ENCODE measurements at regions of chr1 and their contacts with region 1.

Region 1: GRCh38 chr1:34786521-34787325 is 5.7 kb downstream of the GJB3 start:
- DNase-seq: no peak
- H3K4me3 ChIP-seq: no peak overlapping the region
- H3K27ac ChIP-seq: no peak overlapping the region
- H3K4me1 ChIP-seq: peaks cover under 1 to 14% (median 5%) of the 10 kb centered on the region in 6 donors
- H3K27me3 ChIP-seq: peaks cover 5 to 77% (median 18%) of the 10 kb centered on the region in 7 donors
- CTCF ChIP-seq: peak; percentile 34 to 85 (median 71)
- POLR2A ChIP-seq: no peak

Region 2: DNA sequence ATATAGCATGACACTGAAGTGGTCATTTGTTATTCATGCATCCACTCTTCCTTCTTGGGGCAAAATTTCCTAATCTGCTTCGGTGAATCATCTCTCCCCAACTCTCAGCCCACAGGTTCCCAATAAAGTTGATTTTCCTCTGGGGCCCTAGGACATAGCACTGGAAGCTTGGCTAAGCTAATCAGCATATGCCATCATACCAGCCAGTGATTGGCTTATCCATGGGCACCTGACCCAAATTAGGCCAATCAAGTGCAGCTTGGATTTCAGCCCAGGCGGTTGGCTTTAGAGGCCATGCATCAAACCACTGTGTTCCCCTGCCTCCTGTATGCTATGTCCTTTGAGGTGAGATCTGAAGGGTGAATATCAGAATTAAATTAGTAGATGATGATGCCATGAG is 551.1 kb before region 1 on chr1:
- intact Hi-C with region 1: no loop called
- DNase-seq: no peak
- H3K4me3 ChIP-seq: no peak overlapping the region
- H3K27ac ChIP-seq: no peak overlapping the region
- H3K4me1 ChIP-seq: no peaks in the 10 kb centered on the region
- H3K27me3 ChIP-seq: peaks cover 0 to 22% (median 0%) of the 10 kb centered on the region in 7 donors
- CTCF ChIP-seq: no peak
- POLR2A ChIP-seq: no peak

Region 3: GRCh38 chr1:34852677-34853217 is 66.0 kb after region 1 on chr1:
- intact Hi-C with region 1: loop called (anchors 5 kb)
- DNase-seq: peak; percentile 93
- H3K4me3 ChIP-seq: no peak overlapping the region
- H3K27ac ChIP-seq: peak overlapping the region in 3 of 8 donors; percentile 38 to 47 (median 46)
- H3K4me1 ChIP-seq: peaks cover 6 to 64% (median 30%) of the 10 kb centered on the region in 6 donors
- H3K27me3 ChIP-seq: no peaks in the 10 kb centered on the region
- CTCF ChIP-seq: peak; percentile 93 to 99 (median 98)
- POLR2A ChIP-seq: no peak

Measured in spleen (tissue), 13 donors.